A673 (cell line): ENCODE measurements at regions of chr14 and their contacts with region 1.

Region 1: DNA sequence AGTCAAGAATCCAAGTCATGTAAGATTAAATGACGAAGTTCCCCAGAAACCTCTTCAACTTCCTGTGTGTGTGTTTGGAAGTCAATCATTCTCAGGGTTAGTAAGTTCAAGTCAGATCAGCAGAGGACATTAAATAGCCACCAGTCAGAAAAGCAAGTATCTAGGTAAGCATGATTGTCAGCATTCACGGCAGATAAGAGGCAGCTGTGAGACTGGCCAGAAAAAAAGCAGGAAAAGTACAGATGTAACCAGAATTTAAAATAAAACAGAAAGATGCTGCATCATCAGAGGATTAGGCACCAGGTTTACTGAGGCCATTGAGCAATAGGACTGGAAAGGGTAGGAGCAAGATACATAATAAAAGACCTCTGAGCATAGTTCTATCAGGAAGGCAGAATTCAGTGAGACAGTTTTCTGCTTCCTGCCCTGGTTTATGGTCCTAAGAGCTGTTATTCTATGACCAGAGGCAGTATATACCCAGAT is 606.9 kb downstream of the FSCB start:
- DNase-seq: no peak
- H3K4me3 ChIP-seq: no peak overlapping the region
- H3K27ac ChIP-seq: no peak overlapping the region
- H3K4me1 ChIP-seq: peaks cover 16% of the 10 kb centered on the region
- H3K27me3 ChIP-seq: no peaks in the 10 kb centered on the region
- CTCF ChIP-seq: no peak

Region 2: GRCh38 chr14:43464962-43465361 is 435.3 kb before region 1 on chr14:
- CTCF ChIA-PET with region 1: no interaction called
- POLR2A ChIA-PET with region 1: no interaction called
- intact Hi-C with region 1: no loop called
- DNase-seq: no peak
- H3K4me3 ChIP-seq: no peak overlapping the region
- H3K27ac ChIP-seq: no peak overlapping the region
- H3K4me1 ChIP-seq: no peaks in the 10 kb centered on the region
- H3K27me3 ChIP-seq: no peaks in the 10 kb centered on the region
- CTCF ChIP-seq: no peak

Region 3: DNA sequence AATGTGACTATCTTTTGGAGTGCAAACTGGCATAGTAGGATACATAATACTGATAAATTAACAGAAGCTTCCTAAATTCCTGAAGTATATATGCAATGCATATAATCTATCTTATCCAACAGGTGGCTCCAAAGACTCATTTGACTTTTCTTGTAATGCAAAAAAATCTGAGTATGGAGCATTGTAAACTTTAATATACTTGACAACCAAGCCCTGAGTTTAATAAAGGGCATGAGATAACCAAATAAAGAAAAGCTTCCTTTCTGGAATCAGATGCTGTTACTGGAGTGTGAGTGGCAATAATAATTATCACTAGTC is 396.7 kb before region 1 on chr14:
- CTCF ChIA-PET with region 1: no interaction called
- POLR2A ChIA-PET with region 1: no interaction called
- intact Hi-C with region 1: loop called (anchors 10 kb)
- DNase-seq: peak; percentile 66
- H3K4me3 ChIP-seq: no peak overlapping the region
- H3K27ac ChIP-seq: no peak overlapping the region
- H3K4me1 ChIP-seq: peaks cover 8% of the 10 kb centered on the region
- H3K27me3 ChIP-seq: no peaks in the 10 kb centered on the region
- CTCF ChIP-seq: peak; percentile 58

Region 4: DNA sequence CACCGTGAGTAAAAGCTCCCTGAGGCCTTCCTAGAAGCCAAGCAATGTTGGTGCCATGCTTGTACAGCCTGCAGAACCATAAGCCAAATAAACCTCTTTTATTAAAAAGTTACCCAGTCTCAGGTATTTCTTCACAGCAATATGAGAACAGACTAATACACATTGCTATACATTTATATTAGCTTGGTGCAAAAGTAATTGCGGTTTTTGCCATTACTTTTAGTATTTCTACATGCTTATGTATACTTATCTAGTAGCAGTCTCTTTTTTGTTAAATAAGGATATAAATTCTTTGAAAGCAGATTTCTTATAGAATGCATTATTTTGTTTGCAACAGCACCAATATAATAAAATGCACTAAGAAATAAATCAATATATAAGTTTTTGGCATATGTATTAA is 12.7 kb before region 1 on chr14:
- CTCF ChIA-PET with region 1: no interaction called
- POLR2A ChIA-PET with region 1: no interaction called
- intact Hi-C with region 1: no loop called
- DNase-seq: no peak
- H3K4me3 ChIP-seq: no peak overlapping the region
- H3K27ac ChIP-seq: no peak overlapping the region
- H3K4me1 ChIP-seq: peaks cover 10% of the 10 kb centered on the region
- H3K27me3 ChIP-seq: no peaks in the 10 kb centered on the region
- CTCF ChIP-seq: no peak